ENCODE measurements at regions of chr3 and their contacts with region 1.

Region 1: DNA sequence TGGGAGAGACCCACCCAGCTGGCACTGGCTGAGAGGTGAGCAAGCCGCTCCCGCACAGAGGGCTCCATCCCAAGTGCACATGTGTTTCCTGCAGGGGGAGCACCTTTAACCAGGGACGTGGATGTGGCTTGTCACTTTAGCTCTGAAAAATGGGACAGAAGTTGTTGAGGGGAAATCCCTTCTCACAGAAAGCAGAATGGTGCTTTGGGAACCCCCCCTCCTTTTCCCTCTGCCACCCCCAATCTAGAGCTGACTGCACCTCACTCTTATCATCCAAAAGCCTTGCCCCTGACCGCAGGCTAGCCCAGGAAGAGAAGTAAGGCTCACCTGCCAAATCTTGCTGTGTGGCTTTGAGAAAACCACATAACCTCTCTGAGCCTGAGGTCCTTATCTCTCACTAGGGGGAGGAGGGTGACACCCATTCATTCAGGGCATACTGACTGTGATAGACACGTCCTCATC is 77.9 kb downstream of the RPN1 start:
- DNase-seq: peak; percentile 79
- ATAC-seq: peak; percentile 82
- H3K4me3 Mint-ChIP-seq: no peak overlapping the region
- H3K27ac Mint-ChIP-seq: peak overlapping the region; percentile 9
- H3K4me1 Mint-ChIP-seq: peaks cover 17% of the 10 kb centered on the region
- H3K27me3 Mint-ChIP-seq: peaks cover 11% of the 10 kb centered on the region

Region 2: GRCh38 chr3:128505771-128506170 is 66.9 kb before region 1 on chr3:
- CTCF ChIA-PET with region 1: interaction called, 10 read pairs
- POLR2A ChIA-PET with region 1: no interaction called
- intact Hi-C with region 1: no loop called
- DNase-seq: no peak
- ATAC-seq: no peak
- H3K4me3 Mint-ChIP-seq: no peak overlapping the region
- H3K27ac Mint-ChIP-seq: no peak overlapping the region
- H3K4me1 Mint-ChIP-seq: no peaks in the 10 kb centered on the region
- H3K27me3 Mint-ChIP-seq: peaks cover 19% of the 10 kb centered on the region

Region 3: GRCh38 chr3:128515967-128516366 is 56.7 kb before region 1 on chr3:
- CTCF ChIA-PET with region 1: no interaction called
- POLR2A ChIA-PET with region 1: no interaction called
- intact Hi-C with region 1: no loop called
- DNase-seq: no peak
- ATAC-seq: no peak
- H3K4me3 Mint-ChIP-seq: no peak overlapping the region
- H3K27ac Mint-ChIP-seq: no peak overlapping the region
- H3K4me1 Mint-ChIP-seq: no peaks in the 10 kb centered on the region
- H3K27me3 Mint-ChIP-seq: peaks cover 42% of the 10 kb centered on the region

Region 4: DNA sequence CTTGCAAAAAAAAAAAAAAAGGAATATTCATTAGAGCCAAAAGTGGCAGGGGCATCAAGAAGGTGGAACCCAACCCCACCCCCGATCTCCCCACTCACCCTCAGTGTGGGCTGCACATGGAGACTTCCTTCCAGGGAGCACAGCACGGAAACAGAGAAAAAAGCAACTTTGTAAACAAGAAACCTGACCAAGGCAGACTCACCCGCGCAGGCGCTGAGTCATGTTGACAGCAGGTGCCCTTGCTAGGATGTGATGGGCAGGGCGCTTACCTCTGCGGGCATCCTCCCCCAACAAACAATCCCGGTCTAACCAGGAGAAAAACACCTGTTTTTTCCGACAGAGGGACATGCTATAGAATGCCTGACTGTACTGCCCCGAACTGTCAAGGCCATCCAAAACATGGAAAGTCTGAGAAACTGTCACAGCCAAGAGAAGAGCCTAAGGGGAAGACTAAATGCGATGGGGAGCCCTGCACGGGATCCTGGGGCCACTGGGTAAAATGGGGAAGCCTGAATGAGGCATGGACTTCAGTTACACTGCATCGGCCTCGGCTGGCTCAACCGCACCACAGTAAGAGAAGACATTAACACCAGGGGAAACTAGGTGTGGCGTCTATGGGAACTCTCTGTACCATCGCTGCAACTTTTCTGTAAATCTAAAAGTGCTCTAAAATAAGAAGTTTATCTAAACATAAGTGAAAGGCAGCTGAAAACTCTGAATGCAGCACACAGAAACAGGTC is 13.0 kb before region 1 on chr3:
- CTCF ChIA-PET with region 1: no interaction called
- POLR2A ChIA-PET with region 1: no interaction called
- intact Hi-C with region 1: no loop called
- DNase-seq: peak; percentile 59
- ATAC-seq: peak; percentile 65
- H3K4me3 Mint-ChIP-seq: no peak overlapping the region
- H3K27ac Mint-ChIP-seq: no peak overlapping the region
- H3K4me1 Mint-ChIP-seq: peaks cover 5% of the 10 kb centered on the region
- H3K27me3 Mint-ChIP-seq: peaks cover 29% of the 10 kb centered on the region

Region 5: DNA sequence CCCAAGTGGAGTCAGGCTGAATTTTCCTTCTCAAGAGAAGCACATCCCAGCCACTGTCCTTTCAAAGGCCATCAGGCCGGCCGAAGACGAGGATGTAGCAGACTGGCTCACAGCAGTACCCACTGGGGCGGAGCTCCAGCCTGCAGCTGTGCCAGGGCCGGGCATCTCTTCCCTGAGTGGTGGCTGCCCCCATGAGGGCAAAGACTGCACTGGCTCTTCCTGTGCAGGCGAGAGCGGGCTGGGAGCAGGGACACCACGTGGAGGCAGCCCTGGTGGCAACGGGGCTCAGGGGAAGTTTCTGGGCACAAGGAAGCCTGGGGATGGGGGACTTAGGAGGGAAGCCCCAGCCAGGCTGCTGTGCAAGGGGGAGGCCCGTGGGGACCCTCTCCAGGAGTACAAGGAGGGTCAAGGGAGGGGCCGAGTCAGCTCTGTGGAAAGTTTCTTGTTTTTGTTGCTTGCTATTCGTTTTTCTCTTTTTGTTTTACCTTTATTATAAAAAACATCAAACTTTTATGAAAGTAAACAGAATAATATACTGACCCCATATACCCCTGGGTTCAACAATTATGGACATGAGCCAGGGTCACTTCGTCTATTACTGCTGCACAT is 11.8 kb after region 1 on chr3:
- CTCF ChIA-PET with region 1: interaction called, 13 read pairs
- POLR2A ChIA-PET with region 1: no interaction called
- intact Hi-C with region 1: no loop called
- DNase-seq: peak; percentile 81
- ATAC-seq: peak; percentile 99
- H3K4me3 Mint-ChIP-seq: no peak overlapping the region
- H3K27ac Mint-ChIP-seq: no peak overlapping the region
- H3K4me1 Mint-ChIP-seq: peaks cover 6% of the 10 kb centered on the region
- H3K27me3 Mint-ChIP-seq: peaks cover 11% of the 10 kb centered on the region

Region 6: DNA sequence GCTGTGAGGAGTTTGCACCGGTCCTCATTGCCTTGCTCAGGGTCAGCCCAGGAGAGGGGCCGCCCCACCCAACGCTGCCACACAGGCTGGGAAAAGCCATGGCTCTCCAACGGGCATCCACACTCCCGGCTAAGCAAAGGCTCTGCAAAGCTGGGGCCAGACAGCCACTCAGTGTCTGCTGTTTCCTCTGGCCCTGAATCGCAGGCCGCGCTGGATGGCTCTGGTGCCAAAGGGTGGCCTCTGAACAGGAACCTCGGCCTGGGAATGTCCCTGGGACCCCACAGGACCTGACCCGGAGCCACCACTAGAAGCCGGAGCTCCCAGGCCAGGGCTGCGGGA is 35.0 kb after region 1 on chr3:
- CTCF ChIA-PET with region 1: interaction called, 3 read pairs
- POLR2A ChIA-PET with region 1: no interaction called
- intact Hi-C with region 1: loop called (anchors 2 kb)
- DNase-seq: no peak
- ATAC-seq: no peak
- H3K4me3 Mint-ChIP-seq: no peak overlapping the region
- H3K27ac Mint-ChIP-seq: no peak overlapping the region
- H3K4me1 Mint-ChIP-seq: no peaks in the 10 kb centered on the region
- H3K27me3 Mint-ChIP-seq: no peaks in the 10 kb centered on the region

Region 7: DNA sequence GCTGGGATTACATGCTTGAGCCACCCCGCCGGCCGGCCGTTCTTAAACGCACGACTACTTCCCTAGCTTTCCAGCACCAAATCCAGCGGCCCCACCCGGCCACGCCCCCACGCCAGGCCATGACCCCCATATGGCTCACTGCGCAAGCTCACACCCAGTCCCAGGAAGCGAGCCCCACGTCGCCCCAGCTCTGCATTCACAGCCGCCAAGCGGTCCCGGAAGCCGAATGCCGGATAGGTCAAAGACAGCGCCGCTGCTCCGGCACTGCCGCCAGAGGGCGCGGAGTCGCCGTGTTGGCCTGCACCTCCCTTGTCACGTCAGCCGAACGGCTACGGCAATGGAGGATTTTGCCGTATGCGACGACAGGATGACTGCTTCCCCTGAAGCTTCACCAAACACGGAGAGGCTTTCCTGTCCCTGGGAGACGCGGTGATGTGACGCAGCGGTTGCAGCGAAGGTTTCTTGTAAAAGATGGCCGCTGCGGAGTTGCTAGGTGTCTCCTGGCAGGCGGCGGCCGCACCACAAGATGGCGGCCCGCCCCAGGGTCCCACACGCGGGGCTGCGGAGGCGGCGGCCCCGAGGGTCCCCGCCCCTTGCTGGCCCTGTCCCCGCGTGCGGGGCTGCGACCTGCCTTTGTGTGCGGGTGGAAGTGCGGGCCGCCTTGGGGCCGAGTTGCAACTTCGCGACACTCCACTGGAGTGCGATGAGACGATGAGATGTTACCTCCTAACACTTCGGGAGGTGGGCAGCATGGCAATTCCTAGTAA is 108.1 kb after region 1 on chr3:
- CTCF ChIA-PET with region 1: no interaction called
- POLR2A ChIA-PET with region 1: no interaction called
- intact Hi-C with region 1: no loop called
- DNase-seq: peak; percentile 98
- ATAC-seq: peak; percentile 98
- H3K4me3 Mint-ChIP-seq: peak overlapping the region; percentile 96
- H3K27ac Mint-ChIP-seq: peak overlapping the region; percentile 99
- H3K4me1 Mint-ChIP-seq: peaks cover 31% of the 10 kb centered on the region
- H3K27me3 Mint-ChIP-seq: no peaks in the 10 kb centered on the region

Measured in activated CD4-positive, alpha-beta T cell treated with anti-CD3 and anti-CD28 coated beads for 36 hours (primary cell).